Activated CD4-positive, alpha-beta memory T cell treated with anti-CD3 and anti-CD28 coated beads for 36 hours (primary cell): ENCODE measurements at regions of chr10 and their contacts with region 1.

Region 1: DNA sequence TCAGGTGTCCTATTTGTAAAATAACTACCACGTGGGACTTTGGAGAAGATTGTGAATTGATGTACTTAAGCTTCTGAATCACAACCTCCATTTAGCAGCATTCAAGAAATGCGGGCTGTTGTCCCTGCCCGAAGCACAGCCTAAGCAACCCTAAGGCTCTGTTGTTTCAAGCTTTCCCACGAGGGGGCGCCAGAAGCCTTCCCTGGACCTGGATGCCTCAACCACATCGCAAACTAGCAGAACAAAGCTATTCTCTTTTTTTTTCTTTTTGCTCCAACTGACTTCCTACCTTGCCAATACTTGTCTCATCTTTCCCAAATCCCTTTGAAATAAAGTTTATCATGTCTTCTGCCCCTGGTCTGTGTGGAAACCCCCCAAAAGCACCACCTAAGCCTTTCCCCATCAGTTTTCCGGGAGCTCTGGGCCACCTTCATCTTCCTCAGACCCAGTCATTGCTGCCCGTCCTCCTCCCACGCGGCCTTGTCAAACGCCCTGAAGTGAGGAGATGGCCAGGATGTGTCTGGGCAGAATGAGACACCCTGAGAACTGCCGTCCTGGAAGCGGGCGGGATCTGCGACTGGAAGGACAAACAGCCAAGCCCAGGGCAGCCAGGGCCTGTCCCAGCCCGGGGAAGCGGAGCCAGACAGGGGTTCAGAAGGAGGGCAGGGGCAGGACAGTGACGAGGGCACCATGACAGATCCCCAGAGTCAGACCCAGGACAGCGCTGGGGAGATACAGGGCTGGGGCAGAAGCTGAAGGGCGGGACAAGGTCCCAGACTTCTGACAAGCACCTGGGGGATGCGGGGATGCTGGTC is 112.7 kb downstream of the SLIT1 start:
- DNase-seq: peak; percentile 89
- H3K4me3 Mint-ChIP-seq: no peak overlapping the region
- H3K27ac Mint-ChIP-seq: no peak overlapping the region
- H3K4me1 Mint-ChIP-seq: peaks cover 13% of the 10 kb centered on the region
- H3K27me3 Mint-ChIP-seq: peaks cover 15% of the 10 kb centered on the region

Region 2: DNA sequence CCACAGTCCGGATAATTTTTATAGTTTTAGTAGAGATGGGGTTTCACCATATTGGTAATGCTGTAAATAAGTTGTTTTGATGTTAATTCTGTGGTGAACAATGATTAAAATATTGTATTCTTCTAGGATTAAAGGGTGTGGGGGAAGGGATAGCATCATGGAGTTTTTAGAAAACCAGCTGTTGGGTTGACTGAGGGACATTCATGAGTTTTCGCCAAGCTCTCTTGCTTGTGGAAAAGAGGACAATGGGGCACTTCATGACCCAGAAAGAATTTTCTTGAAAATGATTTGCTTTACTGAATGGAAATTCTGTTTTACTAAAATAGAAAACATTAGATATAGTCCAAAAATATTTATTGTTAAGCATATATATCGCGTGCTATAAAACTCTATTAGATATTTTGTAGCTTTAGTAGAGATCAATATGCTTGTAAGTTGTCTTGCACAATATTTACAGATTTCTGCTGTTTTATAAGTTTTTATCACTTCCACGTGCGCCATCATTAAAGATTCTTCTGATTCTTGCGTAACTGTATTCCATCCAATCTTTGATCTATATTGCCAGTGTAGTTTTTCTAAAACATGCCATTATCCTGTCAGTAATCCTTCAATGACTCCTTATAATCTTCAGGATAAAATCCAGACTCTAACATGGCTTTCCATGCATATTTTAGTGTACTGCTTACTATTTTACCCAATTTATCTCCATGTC is 199.1 kb before region 1 on chr10:
- CTCF ChIA-PET with region 1: no interaction called
- POLR2A ChIA-PET with region 1: no interaction called
- intact Hi-C with region 1: no loop called
- DNase-seq: no peak
- H3K4me3 Mint-ChIP-seq: no peak overlapping the region
- H3K27ac Mint-ChIP-seq: peak overlapping the region; percentile 69
- H3K4me1 Mint-ChIP-seq: peaks cover 45% of the 10 kb centered on the region
- H3K27me3 Mint-ChIP-seq: no peaks in the 10 kb centered on the region

Region 3: GRCh38 chr10:96991313-96991841 is 81.7 kb before region 1 on chr10:
- CTCF ChIA-PET with region 1: no interaction called
- POLR2A ChIA-PET with region 1: no interaction called
- intact Hi-C with region 1: no loop called
- DNase-seq: no peak
- H3K4me3 Mint-ChIP-seq: no peak overlapping the region
- H3K27ac Mint-ChIP-seq: no peak overlapping the region
- H3K4me1 Mint-ChIP-seq: peaks cover 6% of the 10 kb centered on the region
- H3K27me3 Mint-ChIP-seq: no peaks in the 10 kb centered on the region

Region 4: DNA sequence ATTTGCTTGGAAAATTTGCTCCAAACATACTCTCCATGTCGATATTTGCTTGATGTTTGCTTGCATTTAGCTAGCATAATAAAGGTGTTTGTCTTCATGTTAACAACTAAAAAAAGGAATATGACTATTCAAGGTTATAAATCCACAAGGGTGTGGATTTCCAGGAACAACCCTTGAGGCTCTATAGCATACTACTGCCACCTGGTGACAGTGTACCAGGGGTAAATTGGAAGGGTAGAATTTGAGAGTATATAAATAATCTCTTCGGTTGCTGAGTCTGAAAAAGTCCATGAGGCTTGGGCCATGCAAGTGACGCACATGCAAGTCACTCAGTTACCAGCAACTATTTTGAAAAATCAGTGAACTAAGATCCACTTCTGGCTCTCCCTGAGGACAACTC is 44.3 kb after region 1 on chr10:
- CTCF ChIA-PET with region 1: interaction called, 29 read pairs
- POLR2A ChIA-PET with region 1: no interaction called
- intact Hi-C with region 1: loop called (anchors 5 kb)
- DNase-seq: no peak
- H3K4me3 Mint-ChIP-seq: no peak overlapping the region
- H3K27ac Mint-ChIP-seq: no peak overlapping the region
- H3K4me1 Mint-ChIP-seq: no peaks in the 10 kb centered on the region
- H3K27me3 Mint-ChIP-seq: peaks cover 9% of the 10 kb centered on the region

Region 5: GRCh38 chr10:97196223-97197029 is 123.4 kb after region 1 on chr10:
- CTCF ChIA-PET with region 1: interaction called, 364 read pairs
- POLR2A ChIA-PET with region 1: no interaction called
- intact Hi-C with region 1: loop called (anchors 2 kb)
- DNase-seq: peak; percentile 73
- H3K4me3 Mint-ChIP-seq: peak overlapping the region; percentile 64
- H3K27ac Mint-ChIP-seq: no peak overlapping the region
- H3K4me1 Mint-ChIP-seq: peaks cover 10% of the 10 kb centered on the region
- H3K27me3 Mint-ChIP-seq: peaks cover 24% of the 10 kb centered on the region

Region 6: DNA sequence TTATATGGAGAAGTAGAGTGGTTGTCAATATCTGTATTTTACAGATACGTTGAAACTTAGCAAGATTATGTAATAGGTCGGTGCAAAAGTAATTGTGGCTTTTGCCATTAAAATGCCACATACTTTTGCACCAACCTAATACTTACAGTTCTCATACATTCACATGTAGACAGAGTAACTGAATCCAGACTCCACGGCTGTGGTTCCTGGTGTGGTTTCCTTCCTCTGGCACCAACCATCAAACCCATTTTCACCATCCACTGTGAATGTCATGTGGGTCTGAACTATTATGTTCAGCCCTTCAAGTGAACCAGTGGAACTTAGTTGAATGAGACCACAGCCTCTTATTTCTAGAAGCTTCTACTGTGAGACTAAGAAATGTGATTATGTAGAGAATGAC is 144.2 kb after region 1 on chr10:
- CTCF ChIA-PET with region 1: interaction called, 364 read pairs
- POLR2A ChIA-PET with region 1: interaction called, 4 read pairs
- intact Hi-C with region 1: no loop called
- DNase-seq: no peak
- H3K4me3 Mint-ChIP-seq: no peak overlapping the region
- H3K27ac Mint-ChIP-seq: no peak overlapping the region
- H3K4me1 Mint-ChIP-seq: peaks cover 29% of the 10 kb centered on the region
- H3K27me3 Mint-ChIP-seq: no peaks in the 10 kb centered on the region

Region 7: DNA sequence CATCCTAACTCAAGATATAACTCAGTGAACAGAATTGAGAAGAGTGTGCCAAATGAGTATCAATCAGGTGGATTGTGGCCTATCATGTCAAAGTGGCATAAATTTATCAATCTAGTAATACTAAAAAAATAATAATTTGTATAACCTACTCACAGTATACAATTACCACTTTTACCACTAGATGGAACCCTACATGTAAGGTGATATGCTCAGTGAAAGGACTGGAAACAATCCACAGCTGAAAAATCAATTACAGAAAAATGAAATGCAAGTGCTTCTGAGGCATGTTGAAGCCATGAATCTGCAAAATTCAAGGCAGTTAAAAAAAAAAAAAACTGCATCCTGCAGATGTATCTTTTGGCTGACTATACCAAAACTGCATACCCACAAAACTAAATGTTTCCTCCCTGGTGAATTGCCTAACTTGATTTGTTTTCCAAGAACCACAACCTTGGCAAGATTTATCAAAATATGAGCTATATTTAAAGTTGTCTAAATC is 205.5 kb after region 1 on chr10:
- CTCF ChIA-PET with region 1: interaction called, 10 read pairs
- POLR2A ChIA-PET with region 1: no interaction called
- intact Hi-C with region 1: no loop called
- DNase-seq: no peak
- H3K4me3 Mint-ChIP-seq: no peak overlapping the region
- H3K27ac Mint-ChIP-seq: no peak overlapping the region
- H3K4me1 Mint-ChIP-seq: peaks cover 26% of the 10 kb centered on the region
- H3K27me3 Mint-ChIP-seq: no peaks in the 10 kb centered on the region